WTC11 (cell line): ENCODE measurements at regions of chr11 and their contacts with region 1.

Region 1: DNA sequence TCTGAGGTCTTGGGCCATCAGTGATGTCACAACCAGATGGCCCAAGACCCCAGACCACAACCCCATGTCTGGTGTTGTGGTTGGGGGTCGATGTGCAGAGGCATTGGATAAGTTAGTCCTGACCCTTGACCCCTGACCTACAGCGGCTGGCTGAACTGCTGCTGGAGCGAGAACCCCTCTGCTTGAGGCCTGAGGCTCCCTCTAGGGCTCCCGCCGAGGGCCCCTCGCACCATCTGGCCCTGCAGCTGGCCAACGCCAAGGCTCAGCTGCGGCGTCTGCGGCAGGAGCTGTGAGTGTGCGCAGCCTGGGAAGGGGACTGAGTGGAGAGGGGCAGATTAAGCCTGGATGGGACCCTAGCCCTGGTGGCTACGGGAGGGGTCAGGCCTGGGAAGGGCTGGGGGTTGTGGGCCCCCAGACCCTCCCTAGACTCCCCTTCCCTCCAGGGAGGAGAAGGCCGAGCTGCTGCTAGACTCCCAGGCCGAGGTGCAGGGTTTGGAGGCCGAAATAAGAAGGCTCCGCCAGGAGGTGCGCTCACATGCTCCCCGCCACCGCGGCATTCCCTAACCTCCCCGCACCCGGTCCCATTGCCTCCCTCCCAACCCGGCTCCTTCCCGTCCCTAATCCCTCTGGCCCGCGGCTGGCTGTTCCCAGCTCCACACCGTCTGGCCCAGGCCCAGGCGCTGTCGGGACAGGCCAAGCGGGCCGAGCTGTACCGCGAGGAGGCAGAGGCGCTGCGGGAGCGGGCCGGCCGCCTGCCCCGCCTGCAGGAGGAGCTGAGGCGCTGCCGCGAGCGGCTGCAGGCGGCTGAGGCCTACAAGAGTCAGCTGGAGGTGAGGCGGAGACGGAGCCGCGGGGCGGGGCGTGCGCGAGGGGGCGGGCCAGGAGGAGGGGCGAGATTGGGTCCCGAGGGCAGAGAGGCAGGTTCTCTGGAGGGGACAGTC is 2.1 kb downstream of the CCDC88B start:
- DNase-seq: peak; percentile 97
- ATAC-seq: peak; percentile 75
- H3K4me3 Mint-ChIP-seq: peak overlapping the region; percentile 69
- H3K27ac Mint-ChIP-seq: no peak overlapping the region
- H3K4me1 Mint-ChIP-seq: peaks cover 21% of the 10 kb centered on the region
- H3K27me3 Mint-ChIP-seq: peaks cover 30% of the 10 kb centered on the region
- CTCF ChIP-seq: no peak

Region 2: GRCh38 chr11:64269380-64270234 is 72.5 kb before region 1 on chr11:
- CTCF ChIA-PET with region 1: interaction called, 32 read pairs
- POLR2A ChIA-PET with region 1: no interaction called
- DNase-seq: peak; percentile 98
- ATAC-seq: peak; percentile 83
- H3K4me3 Mint-ChIP-seq: peak overlapping the region; percentile 99
- H3K27ac Mint-ChIP-seq: peak overlapping the region; percentile 100
- H3K4me1 Mint-ChIP-seq: peaks cover 21% of the 10 kb centered on the region
- H3K27me3 Mint-ChIP-seq: no peaks in the 10 kb centered on the region
- CTCF ChIP-seq: no peak

Region 3: GRCh38 chr11:64324692-64325469 is 17.2 kb before region 1 on chr11:
- CTCF ChIA-PET with region 1: interaction called, 118 read pairs
- POLR2A ChIA-PET with region 1: interaction called, 11 read pairs
- DNase-seq: no peak
- ATAC-seq: peak; percentile 29
- H3K4me3 Mint-ChIP-seq: no peak overlapping the region
- H3K27ac Mint-ChIP-seq: peak overlapping the region; percentile 89
- H3K4me1 Mint-ChIP-seq: peaks cover 7% of the 10 kb centered on the region; the same call in 1 of the 2 replicates
- H3K27me3 Mint-ChIP-seq: peaks cover 9% of the 10 kb centered on the region; the same call in 1 of the 2 replicates
- CTCF ChIP-seq: no peak

Region 4: GRCh38 chr11:64372802-64373597 is 30.9 kb after region 1 on chr11:
- CTCF ChIA-PET with region 1: interaction called, 15 read pairs
- POLR2A ChIA-PET with region 1: interaction called, 5 read pairs
- DNase-seq: no peak
- ATAC-seq: peak; percentile 72
- H3K4me3 Mint-ChIP-seq: peak overlapping the region; percentile 10; the same call in 1 of the 2 replicates
- H3K27ac Mint-ChIP-seq: no peak overlapping the region
- H3K4me1 Mint-ChIP-seq: peaks cover 11% of the 10 kb centered on the region
- H3K27me3 Mint-ChIP-seq: no peaks in the 10 kb centered on the region
- CTCF ChIP-seq: no peak

Region 5: GRCh38 chr11:64396079-64396591 is 54.0 kb after region 1 on chr11:
- CTCF ChIA-PET with region 1: interaction called, 12 read pairs
- POLR2A ChIA-PET with region 1: no interaction called
- DNase-seq: peak; percentile 48
- ATAC-seq: peak; percentile 90
- H3K4me3 Mint-ChIP-seq: peak overlapping the region; percentile 38
- H3K27ac Mint-ChIP-seq: peak overlapping the region; percentile 96
- H3K4me1 Mint-ChIP-seq: peaks cover 27% of the 10 kb centered on the region
- H3K27me3 Mint-ChIP-seq: peaks cover 23% of the 10 kb centered on the region
- CTCF ChIP-seq: no peak